Mucosa of descending colon (tissue), 3 donors: ENCODE measurements at regions of chr17 and their contacts with region 1.

Region 1: GRCh38 chr17:59435238-59435637 is 103.8 kb downstream of the YPEL2 start:
- DNase-seq: no peak
- ATAC-seq: no peak
- H3K4me3 ChIP-seq: no peak overlapping the region
- H3K4me1 ChIP-seq: no peaks in the 10 kb centered on the region
- CTCF ChIP-seq: no peak

Region 2: GRCh38 chr17:59329638-59330313 is 105.5 kb before region 1 on chr17:
- intact Hi-C with region 1: loop called in 1 of 2 experiments (anchors 5 kb)
- DNase-seq: peak; percentile 56 to 58 (median 57)
- ATAC-seq: peak; percentile 50
- H3K4me3 ChIP-seq: no peak overlapping the region
- H3K4me1 ChIP-seq: peaks cover 30% of the 10 kb centered on the region
- CTCF ChIP-seq: peak; percentile 57